GM12878 (cell line): ENCODE measurements at regions of chr4 and their contacts with region 1.

Region 1: DNA sequence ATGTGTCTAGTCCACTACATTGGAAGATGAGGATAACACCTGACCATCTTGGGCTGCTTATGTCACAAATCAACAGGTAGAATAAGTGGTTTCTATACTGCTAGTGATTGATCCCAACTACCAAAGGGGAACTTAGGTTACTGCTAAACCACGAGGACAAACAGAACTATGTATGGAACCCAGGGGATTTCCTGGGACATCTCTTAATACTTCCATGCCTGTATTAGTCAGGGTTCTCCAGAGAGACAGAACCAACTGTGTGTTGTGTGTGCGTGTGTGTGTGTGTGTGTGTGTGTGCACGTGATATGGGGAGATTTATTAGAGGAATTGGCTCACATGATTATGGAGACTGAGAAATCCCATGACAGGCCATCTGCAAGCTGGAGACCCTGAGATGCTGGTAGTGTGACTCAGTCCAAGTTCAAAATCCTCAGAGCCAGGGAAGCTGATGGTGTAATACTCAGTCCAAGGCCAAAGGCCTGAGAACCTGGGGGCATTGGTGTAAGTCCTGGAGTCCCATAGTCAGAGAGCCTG is 16.2 kb upstream of the AFF1 start:
- DNase-seq: no peak
- ATAC-seq: peak; percentile 53
- H3K4me3 ChIP-seq: no peak overlapping the region
- H3K27ac ChIP-seq: no peak overlapping the region
- H3K4me1 ChIP-seq: peaks cover 3% of the 10 kb centered on the region; the same call in 1 of the 2 replicates
- H3K27me3 ChIP-seq: no peaks in the 10 kb centered on the region
- CTCF ChIP-seq: no peak
- EP300 ChIP-seq: no peak
- POLR2A ChIP-seq: no peak
- RAD21 ChIP-seq: no peak

Region 2: DNA sequence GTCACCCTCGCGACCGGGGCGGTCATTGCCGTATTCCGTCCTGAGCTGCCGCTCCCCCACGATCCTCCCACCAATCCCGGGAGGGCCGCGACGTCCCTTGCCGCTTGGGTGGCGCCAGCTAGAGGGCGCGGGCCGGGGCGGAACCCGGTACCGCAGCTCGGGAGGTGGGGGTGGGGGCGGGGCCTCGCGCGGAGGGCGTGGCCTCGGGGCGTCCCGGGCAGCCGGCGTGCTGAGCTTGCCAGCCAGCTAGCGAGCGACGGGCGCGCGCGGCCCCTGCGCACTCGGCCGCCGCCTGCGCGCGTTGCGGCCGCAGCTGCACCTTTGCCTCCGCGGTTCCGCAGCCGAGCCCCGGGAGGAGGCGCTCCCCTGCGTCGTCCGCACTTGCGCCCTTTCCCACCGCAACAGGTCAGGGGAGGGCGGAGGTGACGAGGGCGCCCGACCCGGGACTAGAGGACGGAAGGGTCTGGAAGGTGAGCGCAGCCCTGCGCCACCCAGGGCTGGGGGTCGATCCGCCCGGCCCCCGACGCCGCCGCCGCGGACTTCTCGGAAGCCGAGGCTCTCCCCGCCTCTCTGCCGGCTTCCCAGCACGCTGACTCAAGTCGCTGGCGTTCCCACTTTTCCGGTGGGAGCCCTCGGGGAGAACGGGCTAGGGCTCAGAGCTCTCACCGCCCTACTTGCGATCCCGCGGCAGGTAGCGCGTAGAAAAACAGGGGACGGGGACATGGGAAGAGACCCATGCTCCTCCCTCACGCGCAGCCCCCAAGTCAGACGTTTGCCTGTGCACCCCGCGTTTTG is 16.4 kb after region 1 on chr4 and contains the start of gene AFF1:
- CTCF ChIA-PET with region 1: interaction called, 84 read pairs
- POLR2A ChIA-PET with region 1: interaction called, 5 read pairs
- RAD21 ChIA-PET with region 1: interaction called, 89 read pairs
- SMC1A ChIA-PET with region 1: interaction called, 74 read pairs
- in situ Hi-C with region 1: no loop called
- intact Hi-C with region 1: no loop called
- DNase-seq: peak; percentile 71
- ATAC-seq: peak; percentile 72
- H3K4me3 ChIP-seq: peak within 1 kb of the TSS; percentile 91
- H3K27ac ChIP-seq: peak within 1 kb of the TSS; percentile 93
- H3K4me1 ChIP-seq: peaks cover 3% of the 10 kb centered on the region; the same call in 1 of the 2 replicates
- H3K27me3 ChIP-seq: no peaks in the 10 kb centered on the region
- CTCF ChIP-seq: peak in 2 of 3 experiments; percentile 30 to 32; a peak in 4 of 6 replicates
- EP300 ChIP-seq: no peak
- POLR2A ChIP-seq: peak; percentile 96
- RAD21 ChIP-seq: peak; percentile 17; the same call in 1 of the 2 replicates
- polyA plus RNA-seq, gene AFF1: 3.5 to 11.4 TPM

Region 3: DNA sequence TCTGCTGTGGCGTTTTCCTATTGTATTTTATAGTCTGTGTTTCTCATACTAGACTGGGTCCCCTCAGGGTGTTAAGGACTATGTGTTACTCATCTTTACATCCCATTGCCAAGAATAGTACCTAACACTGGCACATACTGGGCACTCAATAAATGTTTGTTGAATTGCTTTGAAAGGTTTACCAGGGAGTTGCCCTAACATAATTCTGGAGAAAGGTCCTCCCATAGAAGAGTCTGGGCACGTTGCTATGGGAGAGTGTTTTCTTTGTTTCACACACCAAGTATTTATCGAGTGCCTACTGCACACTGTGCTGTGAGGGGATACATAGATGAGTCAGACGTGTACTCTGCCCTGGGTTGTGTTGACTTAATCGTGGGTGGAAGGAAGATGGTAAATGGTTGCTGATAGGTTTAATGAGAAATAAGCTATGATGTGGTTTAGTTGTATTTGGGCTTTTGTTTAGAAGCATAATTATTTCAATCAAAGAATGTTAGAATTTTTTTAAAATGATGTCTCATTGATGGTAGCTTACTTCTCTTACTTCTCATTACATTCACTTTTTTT is 59.1 kb after region 1 on chr4:
- CTCF ChIA-PET with region 1: interaction called, 5 read pairs
- POLR2A ChIA-PET with region 1: interaction called, 3 read pairs
- RAD21 ChIA-PET with region 1: interaction called, 11 read pairs
- SMC1A ChIA-PET with region 1: interaction called, 11 read pairs
- in situ Hi-C with region 1: no loop called
- intact Hi-C with region 1: no loop called
- DNase-seq: peak; percentile 67
- ATAC-seq: peak; percentile 96
- H3K4me3 ChIP-seq: peak overlapping the region; percentile 31; the same call in 1 of the 2 replicates
- H3K27ac ChIP-seq: peak overlapping the region; percentile 55
- H3K4me1 ChIP-seq: peaks cover 41% of the 10 kb centered on the region
- H3K27me3 ChIP-seq: no peaks in the 10 kb centered on the region
- CTCF ChIP-seq: no peak
- EP300 ChIP-seq: peak in 1 of 2 experiments; percentile 74; a peak in 1 of 4 replicates
- POLR2A ChIP-seq: no peak
- RAD21 ChIP-seq: no peak

Region 4: DNA sequence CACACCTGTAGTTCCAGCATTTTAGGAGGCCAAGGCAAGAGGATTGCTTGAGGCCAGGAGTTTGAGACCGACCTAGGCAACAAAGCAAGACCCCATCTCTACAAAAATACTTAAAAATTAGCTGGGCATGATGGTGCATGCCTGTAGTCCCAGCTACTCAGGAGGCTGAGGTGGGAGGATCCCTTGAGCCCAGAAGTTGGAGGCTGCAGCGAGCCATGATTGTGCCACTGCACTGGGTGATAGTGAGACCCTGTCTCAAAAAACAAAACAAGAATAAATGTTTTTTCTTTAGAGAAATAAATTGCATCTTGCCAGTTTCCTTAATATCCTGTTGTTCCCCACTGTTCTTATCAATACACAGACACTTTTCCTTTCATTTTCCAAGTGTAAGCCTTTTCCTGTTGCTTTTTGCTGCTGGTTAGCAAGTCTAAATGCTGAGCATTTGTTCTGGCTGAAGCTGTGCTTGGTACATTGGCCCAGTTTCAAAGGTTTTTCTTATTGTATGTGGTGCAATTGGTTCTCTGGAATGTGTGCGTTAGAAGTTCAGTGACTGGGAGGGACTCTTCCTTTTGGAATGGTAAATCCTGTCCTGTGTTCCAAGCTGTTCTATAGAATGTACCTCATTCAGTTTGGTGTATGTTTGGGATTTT is 114.4 kb after region 1 on chr4:
- CTCF ChIA-PET with region 1: interaction called, 9 read pairs
- POLR2A ChIA-PET with region 1: no interaction called
- RAD21 ChIA-PET with region 1: interaction called, 11 read pairs
- SMC1A ChIA-PET with region 1: interaction called, 5 read pairs
- in situ Hi-C with region 1: no loop called
- intact Hi-C with region 1: no loop called
- DNase-seq: no peak
- ATAC-seq: no peak
- H3K4me3 ChIP-seq: no peak overlapping the region
- H3K27ac ChIP-seq: peak overlapping the region; percentile 11; the same call in 1 of the 2 replicates
- H3K4me1 ChIP-seq: peaks cover 52% of the 10 kb centered on the region
- H3K27me3 ChIP-seq: no peaks in the 10 kb centered on the region
- CTCF ChIP-seq: no peak
- EP300 ChIP-seq: no peak
- POLR2A ChIP-seq: no peak
- RAD21 ChIP-seq: no peak

Region 5: DNA sequence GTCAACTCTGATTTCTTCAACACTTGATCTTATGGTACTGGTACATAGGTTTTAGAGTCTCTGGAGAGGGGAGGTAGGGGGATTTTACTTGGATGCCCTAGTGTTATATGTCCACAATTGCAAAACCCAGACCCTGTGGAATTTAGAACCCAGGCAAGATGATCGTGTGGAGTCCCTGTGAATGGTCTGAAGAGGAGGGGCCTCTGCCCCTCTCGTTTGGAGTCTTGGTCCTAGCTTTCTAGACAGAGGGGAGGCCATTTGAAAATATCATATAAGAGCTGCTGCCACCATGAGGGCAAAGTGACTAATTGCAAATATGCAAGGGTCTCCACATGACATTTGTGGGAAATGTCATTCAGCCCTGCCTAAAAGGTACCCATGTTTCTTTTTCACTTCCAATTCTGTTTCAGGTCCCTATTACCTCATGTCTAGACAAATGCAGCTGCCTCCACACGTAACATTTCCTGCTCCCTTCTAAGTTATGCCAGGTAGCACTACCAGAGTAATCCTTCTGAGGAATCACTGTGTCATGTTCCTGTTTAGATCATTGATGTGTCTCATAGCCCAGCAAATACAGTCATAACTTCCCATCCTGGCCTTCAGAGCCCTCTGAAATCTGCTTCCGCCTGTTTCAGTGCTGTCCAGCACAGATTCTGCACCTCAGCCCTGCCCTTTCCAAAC is 175.0 kb after region 1 on chr4:
- CTCF ChIA-PET with region 1: interaction called, 293 read pairs
- POLR2A ChIA-PET with region 1: interaction called, 13 read pairs
- RAD21 ChIA-PET with region 1: interaction called, 183 read pairs
- SMC1A ChIA-PET with region 1: interaction called, 267 read pairs
- in situ Hi-C with region 1: loop called (anchors 5 kb)
- intact Hi-C with region 1: loop called (anchors 1 kb)
- DNase-seq: peak; percentile 43
- ATAC-seq: peak; percentile 93
- H3K4me3 ChIP-seq: no peak overlapping the region
- H3K27ac ChIP-seq: peak overlapping the region; percentile 13; the same call in 1 of the 2 replicates
- H3K4me1 ChIP-seq: peaks cover 16% of the 10 kb centered on the region
- H3K27me3 ChIP-seq: no peaks in the 10 kb centered on the region
- CTCF ChIP-seq: peak; percentile 62 to 78 (median 64)
- EP300 ChIP-seq: 0 out of 4 replicates have a peak, but pooled peaks of 1 of the 2 experiments have one; percentile 9
- POLR2A ChIP-seq: no peak
- RAD21 ChIP-seq: peak; percentile 85

Region 6: GRCh38 chr4:87150498-87151261 is 232.1 kb after region 1 on chr4:
- CTCF ChIA-PET with region 1: interaction called, 42 read pairs
- POLR2A ChIA-PET with region 1: interaction called, 5 read pairs
- RAD21 ChIA-PET with region 1: interaction called, 40 read pairs
- SMC1A ChIA-PET with region 1: interaction called, 25 read pairs
- in situ Hi-C with region 1: no loop called
- intact Hi-C with region 1: no loop called
- DNase-seq: peak; percentile 35
- ATAC-seq: peak; percentile 84
- H3K4me3 ChIP-seq: no peak overlapping the region
- H3K27ac ChIP-seq: no peak overlapping the region
- H3K4me1 ChIP-seq: no peaks in the 10 kb centered on the region
- H3K27me3 ChIP-seq: no peaks in the 10 kb centered on the region
- CTCF ChIP-seq: peak; percentile 82 to 92 (median 84)
- EP300 ChIP-seq: no peak
- POLR2A ChIP-seq: no peak
- RAD21 ChIP-seq: peak; percentile 90